Activated CD4-positive, alpha-beta T cell treated with anti-CD3 and anti-CD28 coated beads for 36 hours (primary cell): ENCODE measurements at regions of chr18 and their contacts with region 1.

Region 1: DNA sequence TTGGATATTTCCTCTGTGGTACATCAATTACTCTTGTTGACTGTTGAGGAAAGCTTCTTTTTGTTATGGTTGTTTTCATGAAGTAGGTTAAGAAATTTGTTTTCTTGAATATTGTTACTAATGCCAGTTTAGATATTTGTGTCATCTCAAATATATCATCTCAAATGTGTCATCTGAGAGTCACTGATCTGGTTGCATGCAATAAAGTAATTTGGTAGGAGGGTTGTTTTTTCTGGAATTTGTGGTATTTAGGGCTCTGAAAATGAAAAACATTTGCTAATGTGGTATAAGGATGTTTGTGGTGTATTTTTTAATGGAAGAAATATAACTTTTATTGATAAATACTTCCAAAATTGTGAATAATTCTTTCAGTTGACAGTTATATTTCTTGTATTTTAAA is 117.7 kb downstream of the GREB1L start:
- DNase-seq: no peak
- ATAC-seq: no peak
- H3K4me3 Mint-ChIP-seq: no peak overlapping the region
- H3K27ac Mint-ChIP-seq: no peak overlapping the region
- H3K4me1 Mint-ChIP-seq: no peaks in the 10 kb centered on the region
- H3K27me3 Mint-ChIP-seq: peaks cover 5% of the 10 kb centered on the region

Region 2: GRCh38 chr18:21398121-21398520 is 38.4 kb after region 1 on chr18:
- CTCF ChIA-PET with region 1: no interaction called
- POLR2A ChIA-PET with region 1: no interaction called
- intact Hi-C with region 1: loop called in 1 of 2 experiments (anchors 5 kb)
- DNase-seq: no peak
- ATAC-seq: no peak
- H3K4me3 Mint-ChIP-seq: no peak overlapping the region
- H3K27ac Mint-ChIP-seq: no peak overlapping the region
- H3K4me1 Mint-ChIP-seq: no peaks in the 10 kb centered on the region
- H3K27me3 Mint-ChIP-seq: peaks cover 6% of the 10 kb centered on the region

Region 3: GRCh38 chr18:22765896-22766295 is 1406.2 kb after region 1 on chr18:
- CTCF ChIA-PET with region 1: no interaction called
- POLR2A ChIA-PET with region 1: no interaction called
- intact Hi-C with region 1: loop called in 1 of 2 experiments (anchors 5 kb)
- DNase-seq: no peak
- ATAC-seq: no peak
- H3K4me3 Mint-ChIP-seq: no peak overlapping the region
- H3K27ac Mint-ChIP-seq: no peak overlapping the region
- H3K4me1 Mint-ChIP-seq: no peaks in the 10 kb centered on the region
- H3K27me3 Mint-ChIP-seq: peaks cover 28% of the 10 kb centered on the region

Region 4: DNA sequence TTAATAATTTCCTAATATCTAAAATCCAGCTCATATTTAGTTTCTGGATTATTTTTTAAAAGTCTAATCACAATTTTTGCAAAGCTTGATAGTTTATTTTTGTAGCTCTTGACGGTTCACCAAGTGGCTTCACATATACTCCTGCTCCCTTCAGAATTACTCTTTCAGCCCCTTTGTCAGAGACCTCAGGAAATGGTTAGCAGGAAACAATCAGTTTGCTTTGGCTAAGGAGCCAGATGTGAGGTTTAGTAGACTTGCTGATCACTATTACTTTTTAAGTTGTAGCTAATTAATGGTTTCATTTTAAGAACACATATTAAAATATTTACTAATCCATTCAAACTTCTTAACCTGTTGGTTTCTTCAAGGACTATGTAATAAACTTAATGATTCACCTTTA is 1575.7 kb after region 1 on chr18:
- CTCF ChIA-PET with region 1: no interaction called
- POLR2A ChIA-PET with region 1: no interaction called
- intact Hi-C with region 1: no loop called
- DNase-seq: no peak
- ATAC-seq: no peak
- H3K4me3 Mint-ChIP-seq: peak overlapping the region; percentile 54
- H3K27ac Mint-ChIP-seq: no peak overlapping the region
- H3K4me1 Mint-ChIP-seq: peaks cover 17% of the 10 kb centered on the region
- H3K27me3 Mint-ChIP-seq: no peaks in the 10 kb centered on the region